ENCODE measurements at regions of chr1 and their contacts with region 1.

Region 1: DNA sequence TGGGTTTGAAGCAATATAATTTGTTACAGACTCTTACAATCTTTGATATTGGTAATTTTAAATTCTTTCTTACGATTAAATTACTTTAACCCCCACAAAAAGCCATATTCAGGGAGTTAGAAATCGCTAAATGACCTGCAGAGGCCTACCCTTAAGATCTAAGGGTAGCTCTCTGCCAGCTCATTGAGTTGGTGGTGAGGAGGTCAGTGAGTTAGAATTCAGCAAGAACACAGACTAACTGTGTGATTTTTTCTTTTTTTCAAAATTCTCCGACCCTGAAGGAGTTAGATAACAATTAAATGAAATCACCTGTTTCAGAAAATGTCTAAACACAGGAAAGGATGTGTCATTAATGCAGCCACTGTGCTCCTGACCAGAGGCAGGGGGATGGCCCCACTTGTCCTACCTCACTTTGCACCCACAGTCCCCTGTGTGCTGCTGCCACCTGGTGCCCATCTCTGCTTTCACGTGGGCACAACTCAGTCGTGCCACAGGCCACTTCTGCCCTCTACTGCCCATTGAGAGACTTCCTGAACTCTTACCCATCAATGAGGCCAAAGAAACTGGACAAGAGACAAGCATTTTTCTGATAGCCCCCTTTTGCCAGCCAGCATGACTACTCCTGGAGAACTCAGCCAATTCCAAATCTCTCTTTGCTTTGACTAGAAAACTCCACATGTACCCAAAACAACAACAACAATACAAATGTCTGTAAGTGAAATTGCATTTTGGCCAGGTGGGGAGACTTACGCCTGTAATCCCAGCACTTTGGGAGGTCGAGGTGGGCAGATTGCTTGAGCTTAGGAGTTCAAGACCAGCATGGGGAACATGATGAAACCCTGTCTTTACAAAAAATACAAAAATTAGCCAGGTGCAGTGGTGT is 8.4 kb downstream of the CFAP45 start:
- DNase-seq: peak; percentile 81 to 90 (median 86)
- ATAC-seq: peak; percentile 79 to 91 (median 89)
- H3K4me3 ChIP-seq: no peak overlapping the region
- H3K27ac ChIP-seq: peak overlapping the region in 2 of 12 donors; percentile 80 to 85
- H3K4me1 ChIP-seq: peaks cover 0 to 48% (median 23%) of the 10 kb centered on the region in 12 donors
- H3K27me3 ChIP-seq: no peaks in the 10 kb centered on the region
- CTCF ChIP-seq: peak; percentile 84 to 98 (median 90)
- POLR2A ChIP-seq: no peak

Region 2: DNA sequence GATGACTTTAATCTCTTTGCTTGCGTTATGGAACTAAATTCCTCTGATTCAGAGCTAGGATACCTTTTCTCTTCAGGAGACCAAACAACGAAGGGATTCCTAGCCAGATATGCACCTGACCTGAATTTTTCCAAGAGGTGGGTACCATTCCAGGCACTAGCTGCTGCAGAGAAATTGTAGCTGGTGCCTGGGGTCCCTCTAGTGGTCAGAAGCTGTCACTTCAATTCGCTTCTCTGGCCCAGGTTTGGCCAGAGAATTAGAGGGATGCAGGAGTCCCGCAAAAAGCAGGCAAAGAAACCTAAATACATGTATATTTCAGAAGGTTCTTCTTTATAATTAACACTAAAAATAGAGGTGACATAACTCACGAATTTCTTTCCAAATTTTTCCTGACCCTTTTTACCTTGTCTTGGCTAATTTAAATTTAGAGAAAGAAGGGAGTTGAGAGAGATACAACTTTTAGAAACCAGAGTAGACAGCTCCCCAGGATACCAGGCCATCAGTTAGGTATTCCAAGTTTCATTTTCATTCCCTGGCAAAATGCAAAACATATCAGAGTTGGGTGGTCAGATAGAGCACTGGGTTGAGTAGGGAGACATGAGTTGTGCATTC is 677.3 kb before region 1 on chr1:
- intact Hi-C with region 1: loop called in 1 of 10 experiments (anchors 10 kb)
- DNase-seq: no peak
- ATAC-seq: peak in 3 of 4 donors; percentile 45 to 72 (median 61)
- H3K4me3 ChIP-seq: no peak overlapping the region
- H3K27ac ChIP-seq: no peak overlapping the region
- H3K4me1 ChIP-seq: peaks cover 0 to 6% (median 0%) of the 10 kb centered on the region in 12 donors
- H3K27me3 ChIP-seq: peaks cover 0 to 44% (median 8%) of the 10 kb centered on the region in 9 donors
- CTCF ChIP-seq: peak; percentile 82 to 95 (median 87)
- POLR2A ChIP-seq: no peak

Region 3: GRCh38 chr1:159798893-159799292 is 92.6 kb before region 1 on chr1:
- intact Hi-C with region 1: loop called (anchors 1 to 2 kb)
- DNase-seq: peak in 4 of 5 donors; percentile 54 to 69 (median 64)
- ATAC-seq: peak; percentile 78 to 95 (median 88)
- H3K4me3 ChIP-seq: no peak overlapping the region
- H3K27ac ChIP-seq: peak overlapping the region in 1 of 12 donors; percentile 5
- H3K4me1 ChIP-seq: peaks cover 0 to 49% (median 0%) of the 10 kb centered on the region in 12 donors
- H3K27me3 ChIP-seq: peaks cover 0 to 18% (median 0%) of the 10 kb centered on the region in 9 donors
- CTCF ChIP-seq: peak; percentile 61 to 87 (median 78)
- POLR2A ChIP-seq: no peak

Region 4: DNA sequence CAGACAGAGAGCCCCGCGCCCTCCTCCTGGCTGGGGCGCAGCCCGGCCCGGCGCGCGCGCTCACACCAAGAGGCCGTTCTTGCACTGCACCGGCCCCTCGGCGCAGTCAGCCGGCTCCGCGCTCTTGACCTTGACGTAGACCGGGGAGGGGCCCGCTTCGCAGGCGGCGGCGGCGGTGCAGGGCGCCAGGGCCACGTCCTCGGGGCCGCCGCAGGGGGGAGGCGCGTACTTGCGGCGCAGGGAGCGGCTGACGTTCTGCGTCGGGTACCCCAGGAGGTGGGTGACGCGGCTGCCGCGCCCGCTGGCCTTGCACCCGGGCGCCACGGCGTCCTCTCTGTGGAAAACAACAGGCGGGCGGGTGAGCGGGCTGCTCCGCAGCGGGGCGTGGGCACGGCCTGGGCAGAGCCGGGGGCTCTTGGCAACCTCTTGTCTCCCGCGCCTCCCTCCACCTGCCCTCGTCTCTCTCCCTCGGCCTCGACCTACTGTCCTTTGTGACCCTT is 36.8 kb before region 1 on chr1:
- intact Hi-C with region 1: loop called in 2 of 10 experiments (anchors 2 to 5 kb)
- DNase-seq: peak; percentile 90 to 95 (median 92)
- ATAC-seq: peak; percentile 82 to 98 (median 94)
- H3K4me3 ChIP-seq: peak overlapping the region; percentile 68 to 96 (median 78)
- H3K27ac ChIP-seq: peak overlapping the region; percentile 90 to 99 (median 98)
- H3K4me1 ChIP-seq: peaks cover 0 to 24% (median 11%) of the 10 kb centered on the region in 12 donors
- H3K27me3 ChIP-seq: no peaks in the 10 kb centered on the region
- CTCF ChIP-seq: peak in 4 of 12 donors; percentile 13 to 36 (median 30)
- POLR2A ChIP-seq: peak in 1 of 2 donors; percentile 87

Region 5: GRCh38 chr1:159869173-159869572 is 22.3 kb before region 1 on chr1:
- intact Hi-C with region 1: no loop called
- DNase-seq: no peak
- ATAC-seq: no peak
- H3K4me3 ChIP-seq: no peak overlapping the region
- H3K27ac ChIP-seq: no peak overlapping the region
- H3K4me1 ChIP-seq: peaks cover 0 to 18% (median 11%) of the 10 kb centered on the region in 12 donors
- H3K27me3 ChIP-seq: peaks cover 0 to 16% (median 0%) of the 10 kb centered on the region in 9 donors
- CTCF ChIP-seq: no peak
- POLR2A ChIP-seq: no peak

Region 6: GRCh38 chr1:159936273-159936904 is 44.9 kb after region 1 on chr1:
- intact Hi-C with region 1: loop called in 1 of 10 experiments (anchors 5 kb)
- DNase-seq: peak; percentile 49 to 88 (median 71)
- ATAC-seq: peak; percentile 39 to 73 (median 68)
- H3K4me3 ChIP-seq: no peak overlapping the region
- H3K27ac ChIP-seq: no peak overlapping the region
- H3K4me1 ChIP-seq: peaks cover 0 to 23% (median 7%) of the 10 kb centered on the region in 12 donors
- H3K27me3 ChIP-seq: peaks cover 0 to 15% (median 0%) of the 10 kb centered on the region in 9 donors
- CTCF ChIP-seq: peak; percentile 90 to 99 (median 97)
- POLR2A ChIP-seq: no peak